ENCODE measurements at regions of chr17 and their contacts with region 1.

Region 1: DNA sequence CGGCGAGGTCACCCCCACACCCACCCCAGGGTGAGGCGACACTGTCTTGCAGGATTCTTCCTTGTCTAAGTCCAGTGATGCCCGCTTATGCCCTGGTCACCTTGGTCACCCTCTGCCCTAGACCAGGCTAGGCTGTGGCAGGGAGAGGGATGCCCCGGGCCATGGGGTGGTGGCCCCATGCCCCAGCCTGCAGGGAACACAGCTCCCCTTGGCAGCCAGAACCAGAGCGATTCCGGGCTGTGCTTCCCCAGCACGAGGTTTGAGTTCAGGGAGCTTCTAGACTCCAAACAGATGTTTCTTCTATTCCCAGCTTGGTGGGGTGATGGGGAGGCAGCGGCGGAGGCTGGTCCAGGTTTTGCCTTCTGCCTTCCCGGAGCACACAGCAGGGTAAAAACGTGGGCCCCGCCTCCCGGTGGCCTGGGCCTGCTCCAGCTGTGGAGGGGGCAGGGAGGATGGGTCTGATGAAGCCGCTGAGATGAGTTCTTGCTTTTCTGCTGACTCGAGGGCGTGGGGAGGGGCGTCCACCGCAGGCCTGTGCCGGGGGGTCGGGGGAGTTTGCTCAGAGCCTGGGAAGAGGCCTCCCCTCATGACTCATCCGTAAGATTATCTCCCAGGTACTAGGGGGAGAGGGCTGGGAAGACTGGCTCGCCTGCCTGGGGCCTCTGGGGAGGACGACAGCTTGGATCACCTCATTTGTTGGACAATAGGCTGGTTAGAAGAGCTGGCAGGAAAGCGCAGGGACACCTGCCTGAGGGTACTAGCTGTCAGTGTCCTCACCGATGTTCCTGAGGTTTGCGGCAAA is 15.4 kb downstream of the SMTNL2 start:
- DNase-seq: peak in 3 of 5 donors; percentile 71 to 79 (median 79)
- ATAC-seq: peak; percentile 25 to 47 (median 39)
- H3K4me3 ChIP-seq: no peak overlapping the region
- H3K27ac ChIP-seq: peak overlapping the region; percentile 77 to 94 (median 86)
- H3K4me1 ChIP-seq: peaks cover 0 to 52% (median 28%) of the 10 kb centered on the region in 12 donors
- H3K27me3 ChIP-seq: no peaks in the 10 kb centered on the region
- CTCF ChIP-seq: no peak
- POLR2A ChIP-seq: no peak

Region 2: DNA sequence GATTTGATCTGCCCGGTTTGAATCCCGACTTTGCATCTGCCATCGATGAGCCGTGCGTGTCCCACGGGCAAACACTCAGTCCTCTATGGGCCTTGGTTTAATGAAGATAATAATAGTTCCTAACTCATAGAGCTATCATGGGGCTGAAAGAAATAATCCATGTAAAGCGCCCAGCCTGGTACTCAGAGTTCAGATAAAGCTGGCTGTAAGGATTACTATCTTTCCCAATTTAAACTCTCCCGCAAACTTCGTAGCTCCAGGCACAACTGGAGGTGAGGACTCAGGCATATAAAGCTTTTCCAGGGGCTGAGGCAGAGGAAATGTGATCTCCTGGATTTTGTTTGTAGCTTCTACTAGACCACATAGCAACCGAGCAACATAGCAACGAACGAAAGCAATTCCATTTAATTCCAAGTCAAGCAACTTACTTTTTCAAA is 25.5 kb after region 1 on chr17:
- intact Hi-C with region 1: loop called in 1 of 10 experiments (anchors 2 kb)
- DNase-seq: no peak
- ATAC-seq: peak; percentile 48 to 69 (median 60)
- H3K4me3 ChIP-seq: no peak overlapping the region
- H3K27ac ChIP-seq: peak overlapping the region in 3 of 12 donors; percentile 3 to 46 (median 37)
- H3K4me1 ChIP-seq: peaks cover 0 to 13% (median 8%) of the 10 kb centered on the region in 12 donors
- H3K27me3 ChIP-seq: peaks cover 0 to 2% (median 0%) of the 10 kb centered on the region in 9 donors
- CTCF ChIP-seq: no peak
- POLR2A ChIP-seq: no peak

Measured in heart left ventricle (tissue), 16 donors.